ENCODE measurements at regions of chr1 and their contacts with region 1.

Region 1: GRCh38 chr1:16366722-16367257 is at the start of gene SZRD1:
- DNase-seq: peak; percentile 98
- ATAC-seq: peak; percentile 88
- H3K4me3 ChIP-seq: peak within 1 kb of the TSS; percentile 61 to 96
- H3K27ac ChIP-seq: peak within 1 kb of the TSS; percentile 92
- H3K4me1 ChIP-seq: peaks cover 4 to 35% of the 10 kb centered on the region in 2 experiments; a peak in 3 of 4 replicates
- H3K27me3 ChIP-seq: no peaks in the 10 kb centered on the region
- CTCF ChIP-seq: no peak
- POLR2A ChIP-seq: no peak
- RAD21 ChIP-seq: no peak
- total RNA-seq, gene SZRD1: 141 TPM

Region 2: GRCh38 chr1:16243936-16244649 is 122.7 kb before region 1 on chr1:
- CTCF ChIA-PET with region 1: interaction called, 10 read pairs
- POLR2A ChIA-PET with region 1: no interaction called
- RAD21 ChIA-PET with region 1: interaction called, 3 to 4 read pairs
- intact Hi-C with region 1: loop called (anchors 2 kb)
- DNase-seq: peak; percentile 65
- ATAC-seq: peak; percentile 85
- H3K4me3 ChIP-seq: no peak overlapping the region
- H3K27ac ChIP-seq: no peak overlapping the region
- H3K4me1 ChIP-seq: peaks cover 5 to 11% of the 10 kb centered on the region in 2 experiments
- H3K27me3 ChIP-seq: no peaks in the 10 kb centered on the region
- CTCF ChIP-seq: peak; percentile 85 to 92 (median 89)
- POLR2A ChIP-seq: no peak
- RAD21 ChIP-seq: peak; percentile 98

Region 3: DNA sequence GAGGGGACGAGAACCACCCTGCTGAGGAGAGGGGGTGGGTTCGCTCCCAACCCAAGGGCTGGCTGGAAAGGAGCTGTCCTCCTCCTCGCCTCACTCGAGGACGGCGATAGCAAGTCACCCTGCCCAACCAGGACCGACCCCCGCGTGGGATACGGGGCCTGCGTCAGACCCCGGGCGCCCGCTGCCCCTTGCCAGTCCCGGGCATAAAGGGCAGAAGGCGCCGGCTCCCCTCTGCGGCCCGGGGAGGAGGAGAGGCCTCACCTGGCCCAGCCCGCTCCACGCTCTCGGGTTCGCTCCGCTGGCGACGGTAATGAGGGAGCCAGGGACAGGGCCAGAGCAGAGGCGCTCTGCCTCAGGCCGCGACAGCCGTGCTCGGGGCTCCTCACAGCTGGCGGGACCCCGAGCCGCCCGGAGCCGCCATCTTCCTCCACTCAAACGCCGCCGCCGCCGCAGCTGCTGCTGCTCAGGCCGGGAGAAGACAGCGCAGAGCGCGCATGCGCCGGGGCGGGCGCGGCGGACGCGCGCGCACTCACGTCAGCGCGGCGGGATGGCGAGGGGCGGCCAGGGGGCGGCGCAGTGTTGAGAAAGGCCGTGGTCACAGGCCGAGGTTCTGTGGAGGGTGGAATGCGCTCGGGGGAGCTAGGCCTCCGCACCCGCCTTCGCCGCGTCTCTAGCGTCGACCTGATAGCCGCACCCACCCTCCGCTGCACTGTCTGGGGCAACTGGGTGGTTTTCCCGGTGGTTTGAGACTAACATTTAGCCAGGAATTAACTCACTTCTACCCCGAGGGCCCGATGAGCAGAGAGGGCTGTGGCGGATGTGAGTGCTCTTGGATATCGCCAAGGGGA is 14.6 kb before region 1 on chr1 and contains the start of gene FBXO42:
- CTCF ChIA-PET with region 1: interaction called, 24 read pairs
- POLR2A ChIA-PET with region 1: interaction called, 4 read pairs
- RAD21 ChIA-PET with region 1: no interaction called
- intact Hi-C with region 1: no loop called
- DNase-seq: peak; percentile 68
- ATAC-seq: peak; percentile 92
- H3K4me3 ChIP-seq: peak within 1 kb of the TSS; percentile 73 to 96
- H3K27ac ChIP-seq: peak within 1 kb of the TSS; percentile 72
- H3K4me1 ChIP-seq: peaks cover 23 to 39% of the 10 kb centered on the region in 2 experiments
- H3K27me3 ChIP-seq: no peaks in the 10 kb centered on the region
- CTCF ChIP-seq: peak in 2 of 3 experiments; percentile 3 to 24; a peak in 1 of 6 replicates
- POLR2A ChIP-seq: peak; percentile 93
- RAD21 ChIP-seq: no peak
- total RNA-seq, gene FBXO42: 20.6 TPM